ENCODE measurements at regions of chr7 and their contacts with region 1.

Region 1: GRCh38 chr7:90671571-90671970 is 75.5 kb downstream of the CDK14 start:
- DNase-seq: no peak
- CTCF ChIP-seq: no peak

Region 2: GRCh38 chr7:90661290-90662151 is 10.1 kb before region 1 on chr7:
- CTCF ChIA-PET with region 1: interaction called, 15 read pairs
- POLR2A ChIA-PET with region 1: no interaction called
- DNase-seq: no peak
- CTCF ChIP-seq: no peak

Region 3: DNA sequence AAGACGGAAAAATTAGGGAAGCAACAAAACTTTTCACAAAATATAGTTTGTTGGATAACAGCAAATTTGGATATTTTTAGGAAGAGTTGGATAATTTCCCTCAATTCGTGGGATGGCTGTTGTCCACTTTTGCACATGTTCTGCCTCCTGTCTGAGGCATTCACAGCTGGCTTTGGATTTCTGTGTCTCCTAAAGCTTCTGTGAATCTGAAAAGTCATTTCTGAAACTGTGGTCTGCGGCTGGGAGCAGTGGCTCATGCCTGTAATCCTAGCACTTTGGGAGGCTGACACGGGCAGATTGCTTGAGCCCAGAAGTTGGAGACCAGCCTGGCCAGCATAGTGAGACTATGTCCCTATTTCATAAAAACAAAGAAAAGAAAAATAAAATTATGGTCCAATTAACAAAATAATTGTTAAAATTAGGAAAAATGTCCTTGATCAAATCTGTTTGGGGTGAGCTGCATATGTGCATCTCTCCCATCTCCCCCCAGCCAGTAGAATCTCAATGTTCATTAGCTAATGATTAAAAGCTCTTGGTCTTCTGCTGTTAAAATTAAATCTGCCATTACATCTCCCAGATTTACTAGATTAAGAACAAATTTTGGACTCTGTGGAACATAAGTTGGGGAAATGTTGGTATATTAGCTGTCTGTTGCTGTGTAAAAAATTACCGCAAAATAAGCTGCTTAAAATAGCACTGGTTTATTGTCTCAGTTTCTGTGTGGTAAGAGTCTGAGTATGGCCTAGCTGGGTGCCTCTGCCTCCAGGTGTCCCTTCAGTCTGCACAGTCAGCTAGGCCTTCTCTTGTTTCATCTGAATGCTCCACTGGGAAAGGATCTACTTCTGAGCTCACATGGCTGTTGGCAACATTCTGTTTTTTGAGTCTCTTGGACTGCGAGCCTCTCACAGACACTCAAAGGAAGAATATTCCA is 260.7 kb after region 1 on chr7:
- CTCF ChIA-PET with region 1: no interaction called
- POLR2A ChIA-PET with region 1: interaction called, 15 read pairs
- DNase-seq: peak; percentile 69
- CTCF ChIP-seq: peak; percentile 18

Measured in GM10248 (cell line).